ENCODE measurements at regions of chr5 and their contacts with region 1.

Region 1: DNA sequence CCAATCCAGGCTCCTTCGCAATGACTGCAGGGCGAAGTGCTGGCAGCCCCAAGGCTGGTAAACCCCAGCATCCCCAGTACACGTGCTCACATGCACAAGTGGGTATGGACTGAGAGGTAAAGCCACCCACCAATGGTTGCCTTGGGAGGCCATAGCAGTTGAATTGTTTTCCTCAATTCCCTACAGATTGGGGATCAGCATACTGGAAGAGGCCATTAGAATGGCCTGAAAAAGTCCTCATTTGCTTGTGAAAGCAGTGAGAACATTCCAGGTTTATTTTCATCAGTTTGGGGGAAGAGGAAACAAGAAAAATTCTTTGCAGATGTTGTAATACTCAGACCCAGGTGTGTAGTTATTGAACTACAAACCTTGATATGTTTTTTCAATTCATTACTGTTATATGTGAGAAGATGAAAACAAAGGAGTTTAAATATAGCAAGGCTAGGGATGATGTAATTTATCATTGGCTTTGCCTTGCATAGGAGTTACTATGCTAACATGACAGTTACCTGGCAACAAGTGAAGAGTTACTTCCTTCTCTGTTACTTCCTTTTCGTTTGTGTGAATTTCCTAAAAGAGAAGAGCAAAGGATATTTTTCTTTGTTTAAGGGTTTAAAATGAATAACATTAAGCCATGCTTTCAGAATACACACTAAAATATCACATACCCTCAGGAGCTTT is 36.4 kb downstream of the MTMR12 start:
- DNase-seq: no peak
- ATAC-seq: peak; percentile 42 to 75 (median 62)
- H3K4me3 ChIP-seq: no peak overlapping the region
- H3K27ac ChIP-seq: peak overlapping the region; percentile 69
- H3K4me1 ChIP-seq: peaks cover 20% of the 10 kb centered on the region
- H3K27me3 ChIP-seq: no peaks in the 10 kb centered on the region
- CTCF ChIP-seq: no peak

Region 2: DNA sequence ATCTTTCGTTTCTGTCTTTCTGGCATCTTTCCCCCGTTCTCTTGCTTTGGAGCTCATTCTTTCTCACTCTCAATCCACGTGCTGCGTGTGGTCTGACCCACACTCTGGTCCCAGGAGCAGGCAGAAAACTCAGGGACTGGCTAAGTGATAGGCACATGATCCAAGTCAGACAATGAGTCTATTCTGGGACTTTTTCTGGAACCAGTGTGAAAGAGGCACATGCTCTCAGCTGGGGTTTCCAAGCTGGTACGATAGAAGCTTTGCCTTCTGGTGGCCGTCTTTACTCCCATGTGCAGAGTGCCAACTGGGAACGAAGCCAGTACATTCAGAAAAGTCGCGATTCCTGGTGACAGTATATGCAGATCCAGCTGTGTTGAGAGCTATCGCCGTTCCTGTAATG is 542.9 kb before region 1 on chr5:
- intact Hi-C with region 1: no loop called
- DNase-seq: no peak
- ATAC-seq: peak in 3 of 4 donors; percentile 47 to 63 (median 63)
- H3K4me3 ChIP-seq: peak overlapping the region; percentile 7
- H3K27ac ChIP-seq: no peak overlapping the region
- H3K4me1 ChIP-seq: no peaks in the 10 kb centered on the region
- H3K27me3 ChIP-seq: no peaks in the 10 kb centered on the region
- CTCF ChIP-seq: no peak

Region 3: GRCh38 chr5:32304622-32305021 is 28.3 kb after region 1 on chr5:
- intact Hi-C with region 1: loop called in 1 of 2 experiments (anchors 5 kb)
- DNase-seq: no peak
- ATAC-seq: no peak
- H3K4me3 ChIP-seq: no peak overlapping the region
- H3K27ac ChIP-seq: no peak overlapping the region
- H3K4me1 ChIP-seq: peaks cover 34% of the 10 kb centered on the region
- H3K27me3 ChIP-seq: no peaks in the 10 kb centered on the region
- CTCF ChIP-seq: no peak

Region 4: DNA sequence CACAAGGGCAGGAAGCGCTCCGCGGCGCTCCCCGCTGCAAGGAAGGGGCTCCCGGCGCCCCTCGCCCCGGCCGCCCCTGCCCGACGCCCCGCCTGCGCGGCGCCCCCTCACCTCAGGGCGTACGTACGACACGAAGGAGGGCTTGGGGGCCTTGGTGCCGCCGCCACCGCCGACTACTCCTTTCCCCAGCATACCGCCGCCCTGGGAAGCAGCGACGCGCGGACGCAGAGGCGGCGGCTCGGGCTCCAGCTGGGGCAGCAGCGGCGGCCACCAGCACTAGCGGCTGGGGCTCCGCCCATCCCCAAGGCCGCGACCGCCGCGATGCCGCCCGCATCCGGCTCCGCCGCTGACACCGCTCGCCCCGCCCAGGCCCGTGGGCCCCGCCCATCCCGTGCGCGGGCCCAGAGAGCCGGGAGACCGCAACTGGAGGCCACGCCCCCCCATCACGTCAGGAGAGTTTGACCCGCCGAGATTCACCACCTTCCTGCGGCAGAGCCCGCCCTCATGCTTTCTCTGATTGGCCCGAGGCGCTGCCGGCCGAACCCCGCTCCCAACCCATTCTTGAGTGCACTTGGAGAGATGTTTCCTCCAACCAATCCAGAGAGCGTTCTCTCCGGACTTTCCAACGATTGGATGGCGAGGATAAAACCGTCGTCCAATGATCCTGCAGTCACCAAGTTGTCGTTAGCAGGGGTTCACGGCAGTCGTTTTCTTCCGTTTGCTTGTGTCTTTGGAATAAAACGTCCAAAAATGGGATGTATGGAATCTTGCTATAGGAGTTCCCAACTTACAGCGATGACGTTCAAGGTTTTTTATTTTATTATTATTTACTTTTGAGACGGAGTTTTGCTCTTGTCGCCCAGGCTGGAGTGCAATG is 36.6 kb after region 1 on chr5 and contains the start of gene MTMR12:
- intact Hi-C with region 1: loop called (anchors 5 kb)
- DNase-seq: peak; percentile 100
- ATAC-seq: peak; percentile 97 to 99 (median 98)
- H3K4me3 ChIP-seq: peak within 1 kb of the TSS; percentile 96
- H3K27ac ChIP-seq: peak within 1 kb of the TSS; percentile 100
- H3K4me1 ChIP-seq: peaks cover 23% of the 10 kb centered on the region
- H3K27me3 ChIP-seq: no peaks in the 10 kb centered on the region
- CTCF ChIP-seq: no peak
- total RNA-seq, gene MTMR12: 8.2 to 8.9 (median 8.6) TPM

Measured in psoas muscle (tissue), 8 donors.